Endothelial cell of umbilical vein (primary cell): ENCODE measurements at regions of chr12 and their contacts with region 1.

Region 1: DNA sequence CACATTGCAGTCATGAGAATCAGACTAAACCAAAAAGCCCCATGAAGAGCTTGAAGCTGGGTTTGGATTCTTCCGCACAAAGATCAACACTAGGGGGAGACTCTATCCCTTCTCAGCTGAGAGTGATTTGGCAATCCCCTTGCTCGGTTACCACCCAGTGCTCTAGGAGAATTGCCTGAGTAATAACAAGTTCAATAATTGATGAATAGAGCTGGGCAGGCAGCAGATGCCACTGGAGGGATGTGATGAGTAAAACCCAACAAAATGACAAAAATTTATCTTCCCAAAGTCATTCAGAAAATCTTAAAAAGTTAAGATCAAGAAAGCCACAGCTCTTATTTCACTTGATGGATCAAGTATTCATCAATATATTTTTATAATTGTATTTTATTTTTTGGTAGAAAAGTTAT is 185.6 kb upstream of the ARID2 start:
- DNase-seq: peak; percentile 79
- H3K4me3 ChIP-seq: no peak overlapping the region
- H3K27ac ChIP-seq: no peak overlapping the region
- H3K4me1 ChIP-seq: no peaks in the 10 kb centered on the region
- H3K27me3 ChIP-seq: peaks cover 8 to 9% of the 10 kb centered on the region in 2 experiments
- CTCF ChIP-seq: peak; percentile 78 to 82
- POLR2A ChIP-seq: no peak

Region 2: DNA sequence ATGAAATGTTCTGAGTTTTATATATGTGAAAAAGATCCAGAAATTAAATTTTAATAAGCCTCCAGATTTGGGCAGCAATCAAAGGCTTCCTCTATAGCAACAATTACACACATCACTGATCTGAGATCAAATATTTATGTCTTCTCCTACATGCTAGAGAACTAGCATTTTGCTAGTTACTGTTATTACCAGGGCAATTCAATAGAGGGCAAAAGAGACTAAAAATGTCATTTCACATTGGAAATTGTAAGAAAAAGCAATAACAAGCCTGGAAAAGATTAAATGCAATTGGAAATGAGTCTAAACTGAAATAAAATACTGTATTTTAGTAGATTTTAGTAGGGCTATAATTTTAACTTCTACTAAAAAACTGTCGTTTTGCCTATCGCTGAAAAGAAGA is 360.7 kb before region 1 on chr12:
- CTCF ChIA-PET with region 1: interaction called, 11 read pairs
- POLR2A ChIA-PET with region 1: no interaction called
- dilution Hi-C with region 1: no loop called
- intact Hi-C with region 1: no loop called
- DNase-seq: peak; percentile 51
- H3K4me3 ChIP-seq: no peak overlapping the region
- H3K27ac ChIP-seq: no peak overlapping the region
- H3K4me1 ChIP-seq: no peaks in the 10 kb centered on the region
- H3K27me3 ChIP-seq: no peaks in the 10 kb centered on the region
- CTCF ChIP-seq: peak in 1 of 2 donors; percentile 28
- POLR2A ChIP-seq: no peak

Region 3: GRCh38 chr12:45464699-45465098 is 79.2 kb before region 1 on chr12:
- CTCF ChIA-PET with region 1: no interaction called
- POLR2A ChIA-PET with region 1: no interaction called
- dilution Hi-C with region 1: no loop called
- intact Hi-C with region 1: no loop called
- DNase-seq: no peak
- H3K4me3 ChIP-seq: no peak overlapping the region
- H3K27ac ChIP-seq: no peak overlapping the region
- H3K4me1 ChIP-seq: no peaks in the 10 kb centered on the region
- H3K27me3 ChIP-seq: peaks cover 5 to 7% of the 10 kb centered on the region in 2 experiments
- CTCF ChIP-seq: no peak
- POLR2A ChIP-seq: no peak

Region 4: GRCh38 chr12:45500157-45500556 is 43.8 kb before region 1 on chr12:
- CTCF ChIA-PET with region 1: no interaction called
- POLR2A ChIA-PET with region 1: no interaction called
- dilution Hi-C with region 1: no loop called
- intact Hi-C with region 1: no loop called
- DNase-seq: no peak
- H3K4me3 ChIP-seq: no peak overlapping the region
- H3K27ac ChIP-seq: no peak overlapping the region
- H3K4me1 ChIP-seq: no peaks in the 10 kb centered on the region
- H3K27me3 ChIP-seq: peaks cover 6 to 9% of the 10 kb centered on the region in 2 experiments
- CTCF ChIP-seq: no peak
- POLR2A ChIP-seq: no peak

Region 5: GRCh38 chr12:45560689-45561088 is 16.8 kb after region 1 on chr12:
- CTCF ChIA-PET with region 1: interaction called, 10 read pairs
- POLR2A ChIA-PET with region 1: no interaction called
- dilution Hi-C with region 1: no loop called
- intact Hi-C with region 1: no loop called
- DNase-seq: no peak
- H3K4me3 ChIP-seq: no peak overlapping the region
- H3K27ac ChIP-seq: no peak overlapping the region
- H3K4me1 ChIP-seq: no peaks in the 10 kb centered on the region
- H3K27me3 ChIP-seq: peaks cover 0 to 5% of the 10 kb centered on the region in 2 experiments
- CTCF ChIP-seq: no peak
- POLR2A ChIP-seq: no peak

Region 6: DNA sequence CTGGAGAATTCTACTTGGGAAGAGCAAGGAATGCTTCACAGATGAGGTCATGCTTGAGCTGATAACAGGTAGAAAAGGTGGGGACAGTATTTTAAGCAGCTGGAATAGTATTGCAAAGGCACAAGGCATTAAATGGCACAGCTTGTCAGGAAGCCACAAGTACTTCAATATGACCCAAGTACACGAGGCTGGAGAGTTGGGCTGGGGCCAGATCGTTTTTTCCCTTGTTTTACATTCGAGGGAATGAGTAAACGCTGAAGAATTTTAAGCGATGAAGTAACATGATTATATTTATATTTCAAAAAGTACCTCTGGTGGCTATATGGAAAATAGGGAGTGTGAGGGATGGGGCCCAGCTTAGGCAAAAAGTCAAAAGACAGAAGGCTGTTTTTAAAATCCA is 130.7 kb after region 1 on chr12:
- CTCF ChIA-PET with region 1: interaction called, 10 read pairs
- POLR2A ChIA-PET with region 1: no interaction called
- dilution Hi-C with region 1: no loop called
- intact Hi-C with region 1: no loop called
- DNase-seq: peak; percentile 74
- H3K4me3 ChIP-seq: no peak overlapping the region
- H3K27ac ChIP-seq: no peak overlapping the region
- H3K4me1 ChIP-seq: no peaks in the 10 kb centered on the region
- H3K27me3 ChIP-seq: no peaks in the 10 kb centered on the region
- CTCF ChIP-seq: no peak
- POLR2A ChIP-seq: no peak

Region 7: GRCh38 chr12:45713078-45713477 is 169.2 kb after region 1 on chr12:
- CTCF ChIA-PET with region 1: interaction called, 11 read pairs
- POLR2A ChIA-PET with region 1: no interaction called
- dilution Hi-C with region 1: no loop called
- intact Hi-C with region 1: no loop called
- DNase-seq: peak; percentile 9
- H3K4me3 ChIP-seq: no peak overlapping the region
- H3K27ac ChIP-seq: no peak overlapping the region
- H3K4me1 ChIP-seq: no peaks in the 10 kb centered on the region
- H3K27me3 ChIP-seq: no peaks in the 10 kb centered on the region
- CTCF ChIP-seq: no peak
- POLR2A ChIP-seq: no peak

Region 8: GRCh38 chr12:45745861-45746277 is 202.0 kb after region 1 on chr12:
- CTCF ChIA-PET with region 1: interaction called, 122 read pairs
- POLR2A ChIA-PET with region 1: no interaction called
- dilution Hi-C with region 1: no loop called
- intact Hi-C with region 1: loop called (anchors 1 kb)
- DNase-seq: peak; percentile 22
- H3K4me3 ChIP-seq: no peak overlapping the region
- H3K27ac ChIP-seq: no peak overlapping the region
- H3K4me1 ChIP-seq: no peaks in the 10 kb centered on the region
- H3K27me3 ChIP-seq: no peaks in the 10 kb centered on the region
- CTCF ChIP-seq: peak; percentile 5 to 16
- POLR2A ChIP-seq: no peak

Region 9: DNA sequence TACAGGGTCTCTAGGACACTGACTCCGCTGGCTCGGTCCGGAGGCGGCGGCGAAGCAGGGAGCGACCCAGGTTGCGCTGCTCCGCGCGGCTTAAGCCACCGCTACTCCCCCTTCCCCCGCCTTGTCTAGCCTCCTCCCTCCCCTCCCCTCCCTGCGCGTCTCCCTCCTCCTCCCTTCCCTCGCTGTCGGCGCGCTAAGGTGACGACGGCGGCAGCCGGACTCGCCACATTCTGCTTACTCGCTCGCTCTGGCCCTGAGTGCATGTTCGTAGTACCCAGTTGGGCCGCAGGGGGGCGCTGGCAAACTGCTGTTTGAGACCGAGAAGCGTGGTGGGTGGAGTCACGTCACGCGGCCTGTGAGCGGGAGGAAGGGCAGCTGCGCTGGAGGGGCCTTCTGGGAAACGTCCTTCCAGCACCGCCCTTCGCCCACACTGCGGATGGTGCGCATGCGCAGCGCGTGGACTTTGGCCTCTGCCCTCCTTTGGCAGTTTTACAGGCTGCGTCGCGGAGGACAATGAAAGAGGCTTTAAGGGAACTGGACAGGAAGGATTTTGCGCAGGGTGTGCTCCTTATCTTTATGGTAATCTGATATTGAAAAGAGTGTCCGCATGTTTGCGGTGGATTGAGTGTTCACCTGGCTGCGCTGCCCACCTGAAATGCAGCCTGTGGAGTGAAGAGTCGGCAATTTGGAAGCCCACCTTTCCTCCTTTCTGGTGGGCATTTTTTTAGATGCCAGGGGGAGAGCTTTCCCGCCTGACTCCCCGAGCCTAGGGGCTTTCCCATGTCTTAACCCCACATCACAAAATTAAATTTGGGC is 446.8 kb after region 1 on chr12 and contains the start of gene SCAF11:
- CTCF ChIA-PET with region 1: interaction called, 4 read pairs
- POLR2A ChIA-PET with region 1: no interaction called
- dilution Hi-C with region 1: no loop called
- intact Hi-C with region 1: loop called (anchors 5 kb)
- DNase-seq: peak; percentile 100
- H3K4me3 ChIP-seq: peak within 1 kb of the TSS; percentile 56 to 91 (median 86)
- H3K27ac ChIP-seq: peak within 1 kb of the TSS; percentile 79
- H3K4me1 ChIP-seq: peaks cover 16% of the 10 kb centered on the region
- H3K27me3 ChIP-seq: no peaks in the 10 kb centered on the region
- CTCF ChIP-seq: peak; percentile 96 to 99
- POLR2A ChIP-seq: peak; percentile 16
- total RNA-seq, gene SCAF11: 95.0 and 109 TPM in 2 replicates